ENCODE measurements at regions of chr7 and their contacts with region 1.

Region 1: DNA sequence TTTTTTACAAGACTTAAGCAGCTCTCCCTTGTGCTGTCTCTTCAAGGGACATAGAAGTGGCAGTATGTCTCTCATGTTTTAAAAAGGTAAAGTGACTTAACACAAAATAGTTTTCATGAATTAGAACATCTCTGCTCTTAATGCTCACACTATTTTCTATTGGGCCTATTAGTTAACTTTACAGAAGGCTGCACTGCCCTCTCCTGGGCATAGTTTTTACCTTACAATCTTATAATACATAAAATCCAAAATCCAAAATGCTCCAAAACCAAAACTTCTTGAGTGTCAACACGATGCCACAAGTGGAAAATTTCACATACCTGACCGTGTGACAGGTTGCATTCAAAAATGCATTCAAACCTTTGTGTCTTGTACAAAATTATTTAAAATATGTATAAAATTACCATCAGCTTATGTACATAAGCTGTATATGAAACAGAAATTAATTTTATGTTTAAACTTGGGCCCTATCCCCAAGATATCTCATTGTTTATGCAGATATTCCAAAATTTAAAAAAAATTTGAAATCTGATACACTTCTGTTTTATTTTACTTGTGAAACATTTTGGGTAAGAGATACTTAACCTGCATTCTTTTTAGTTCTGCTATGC is 25.8 kb downstream of the TES start:
- DNase-seq: peak in 2 of 6 donors; percentile 14 to 32
- ATAC-seq: peak in 3 of 4 donors; percentile 72 to 80 (median 74)
- H3K4me3 ChIP-seq: no peak overlapping the region
- H3K27ac ChIP-seq: no peak overlapping the region
- H3K4me1 ChIP-seq: peaks cover 0 to 22% (median 5%) of the 10 kb centered on the region in 3 donors
- H3K27me3 ChIP-seq: no peaks in the 10 kb centered on the region
- CTCF ChIP-seq: peak in 3 of 4 donors; percentile 8 to 34 (median 32)

Region 2: DNA sequence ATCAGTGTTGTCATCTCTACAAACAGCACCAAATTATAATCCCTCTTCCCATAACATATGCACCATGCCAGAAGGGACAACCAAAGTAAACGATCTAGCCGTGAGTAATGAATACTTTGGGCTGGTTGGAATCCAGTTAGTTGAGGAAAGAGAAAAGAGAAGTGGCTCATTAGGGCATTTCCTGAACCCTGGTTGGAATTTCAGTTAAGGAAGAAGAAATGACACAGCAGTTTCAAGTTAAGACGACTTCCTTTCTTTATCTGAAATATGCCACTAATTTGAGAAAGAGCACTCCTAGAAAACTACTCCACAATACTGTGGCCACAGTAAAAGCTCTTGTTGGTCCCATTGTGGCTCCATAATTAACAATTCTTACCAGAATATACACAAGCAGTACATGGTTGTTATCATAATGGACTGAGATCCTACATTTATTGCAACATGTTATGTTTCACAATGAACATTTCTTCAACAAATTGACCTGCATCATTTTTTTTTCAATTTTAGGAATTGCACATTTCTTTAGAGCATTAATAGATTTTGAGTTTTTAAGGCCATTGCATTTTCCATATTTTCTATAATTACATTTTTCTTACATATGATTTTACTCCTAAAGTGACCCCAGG is 205.4 kb before region 1 on chr7 and contains the start of gene TFEC:
- intact Hi-C with region 1: no loop called
- DNase-seq: no peak
- ATAC-seq: peak in 2 of 4 donors; percentile 31 to 44
- H3K4me3 ChIP-seq: peak within 1 kb of the TSS in 1 of 4 donors; percentile 7
- H3K27ac ChIP-seq: no peak within 1 kb of the TSS
- H3K4me1 ChIP-seq: no peaks in the 10 kb centered on the region
- H3K27me3 ChIP-seq: no peaks in the 10 kb centered on the region
- CTCF ChIP-seq: no peak
- total RNA-seq, gene TFEC: 0.16 to 4.1 (median 0.75) TPM

Region 3: GRCh38 chr7:116111475-116111874 is 124.7 kb before region 1 on chr7:
- intact Hi-C with region 1: no loop called
- DNase-seq: no peak
- ATAC-seq: no peak
- H3K4me3 ChIP-seq: no peak overlapping the region
- H3K27ac ChIP-seq: no peak overlapping the region
- H3K4me1 ChIP-seq: no peaks in the 10 kb centered on the region
- H3K27me3 ChIP-seq: no peaks in the 10 kb centered on the region
- CTCF ChIP-seq: no peak

Region 4: GRCh38 chr7:116177009-116177408 is 59.1 kb before region 1 on chr7:
- intact Hi-C with region 1: loop called in 2 of 3 experiments (anchors 5 kb)
- DNase-seq: no peak
- ATAC-seq: no peak
- H3K4me3 ChIP-seq: no peak overlapping the region
- H3K27ac ChIP-seq: no peak overlapping the region
- H3K4me1 ChIP-seq: no peaks in the 10 kb centered on the region
- H3K27me3 ChIP-seq: no peaks in the 10 kb centered on the region
- CTCF ChIP-seq: no peak